ENCODE measurements at regions of chr1 and their contacts with region 1.

Region 1: DNA sequence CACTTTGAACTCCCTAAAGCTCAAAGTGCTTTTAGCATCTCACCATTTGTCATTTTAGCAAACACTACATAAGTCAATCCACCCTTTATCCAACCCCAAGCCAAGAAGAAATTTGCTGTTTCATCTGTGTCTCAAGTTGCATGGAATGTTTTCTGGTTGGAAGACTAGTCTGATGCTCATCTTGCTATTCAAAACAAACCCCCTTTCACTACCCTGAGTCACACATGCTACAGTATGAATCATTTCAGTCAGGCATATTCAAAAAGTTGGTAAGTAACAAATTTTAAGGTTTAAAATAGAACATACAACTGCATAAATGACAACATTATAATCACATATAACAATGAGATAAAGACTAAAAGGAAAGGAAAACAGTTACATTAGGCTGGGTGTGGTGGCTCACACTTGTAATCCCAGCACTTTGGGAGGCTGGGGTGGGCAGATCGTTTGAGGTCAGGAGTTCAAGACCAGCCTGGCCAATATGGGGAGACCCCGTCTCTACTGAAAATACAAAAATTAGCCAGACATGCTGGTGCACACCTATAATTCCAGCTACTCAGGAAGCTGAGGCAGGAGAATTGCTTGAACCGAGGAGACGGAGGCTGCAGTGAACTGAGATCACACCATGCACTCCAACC is 38.7 kb downstream of the DSTYK start:
- DNase-seq: no peak
- H3K4me3 ChIP-seq: no peak overlapping the region
- H3K27ac ChIP-seq: no peak overlapping the region
- H3K4me1 ChIP-seq: no peaks in the 10 kb centered on the region
- CTCF ChIP-seq: no peak

Region 2: DNA sequence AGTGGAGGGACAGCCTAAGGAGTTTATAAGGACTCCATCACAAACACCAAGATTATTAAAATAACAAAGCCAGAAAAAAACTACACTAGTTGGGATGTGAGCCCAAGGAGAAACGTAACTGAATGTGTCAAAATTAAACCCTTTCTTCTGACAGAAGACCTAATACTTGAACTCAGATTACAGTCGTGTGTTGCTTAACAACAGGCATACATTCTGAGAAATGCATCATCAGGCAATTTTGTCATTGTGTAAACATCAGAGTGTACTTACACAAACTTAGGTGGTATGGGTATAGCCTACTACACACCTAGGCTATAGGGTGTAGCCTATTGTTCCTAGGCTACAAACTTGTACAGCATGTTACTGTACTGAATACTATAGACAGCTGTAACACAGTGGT is 15.2 kb after region 1 on chr1:
- CTCF ChIA-PET with region 1: no interaction called
- POLR2A ChIA-PET with region 1: interaction called, 12 read pairs
- intact Hi-C with region 1: no loop called
- DNase-seq: no peak
- H3K4me3 ChIP-seq: no peak overlapping the region
- H3K27ac ChIP-seq: no peak overlapping the region
- H3K4me1 ChIP-seq: peaks cover 4% of the 10 kb centered on the region
- CTCF ChIP-seq: no peak

Region 3: DNA sequence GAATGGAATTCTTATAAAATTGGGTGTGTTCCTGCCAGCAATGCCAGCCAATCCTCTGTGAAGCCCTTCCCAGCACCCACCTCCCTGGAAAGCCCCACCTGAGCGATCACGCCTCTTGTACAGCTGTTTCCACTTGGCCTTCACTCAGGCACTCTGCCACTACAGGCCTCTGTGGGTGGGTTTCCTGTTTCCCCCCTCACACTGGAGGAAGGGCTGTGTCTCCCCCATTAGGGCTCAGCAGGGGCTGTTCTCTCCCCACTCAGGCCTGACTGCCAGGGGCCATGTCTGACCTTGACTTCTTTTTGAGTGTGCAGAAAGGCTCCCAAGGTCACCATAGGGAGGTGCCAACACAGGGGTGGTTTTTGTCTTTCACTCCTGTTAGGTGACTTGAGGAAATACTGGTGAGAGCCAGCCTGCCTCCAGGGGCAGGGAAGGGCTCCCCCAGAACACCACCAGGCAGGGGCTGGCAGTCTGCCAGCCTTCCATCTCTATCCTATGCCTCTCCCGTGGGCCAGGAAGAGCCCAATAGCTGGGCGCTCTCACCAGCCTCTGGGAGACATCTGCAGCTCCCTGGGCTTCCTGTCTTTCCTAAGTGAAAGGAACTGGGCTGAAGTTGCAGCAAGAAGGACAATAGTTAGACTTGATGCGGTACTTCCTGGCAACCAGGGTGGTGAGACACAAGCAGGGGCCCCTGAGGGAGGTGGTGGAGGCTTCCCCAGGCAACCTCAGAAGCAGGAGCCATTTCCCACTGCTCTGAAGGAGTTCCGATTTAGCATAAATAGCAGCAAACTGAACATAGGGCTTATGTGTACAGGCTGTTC is 409.8 kb after region 1 on chr1:
- CTCF ChIA-PET with region 1: no interaction called
- POLR2A ChIA-PET with region 1: no interaction called
- intact Hi-C with region 1: no loop called
- DNase-seq: peak; percentile 38
- H3K4me3 ChIP-seq: no peak overlapping the region
- H3K27ac ChIP-seq: no peak overlapping the region
- H3K4me1 ChIP-seq: peaks cover 11% of the 10 kb centered on the region
- CTCF ChIP-seq: no peak

Measured in OCI-LY7 (cell line).